Panc1 (cell line): ENCODE measurements at regions of chr15 and their contacts with region 1.

Region 1: DNA sequence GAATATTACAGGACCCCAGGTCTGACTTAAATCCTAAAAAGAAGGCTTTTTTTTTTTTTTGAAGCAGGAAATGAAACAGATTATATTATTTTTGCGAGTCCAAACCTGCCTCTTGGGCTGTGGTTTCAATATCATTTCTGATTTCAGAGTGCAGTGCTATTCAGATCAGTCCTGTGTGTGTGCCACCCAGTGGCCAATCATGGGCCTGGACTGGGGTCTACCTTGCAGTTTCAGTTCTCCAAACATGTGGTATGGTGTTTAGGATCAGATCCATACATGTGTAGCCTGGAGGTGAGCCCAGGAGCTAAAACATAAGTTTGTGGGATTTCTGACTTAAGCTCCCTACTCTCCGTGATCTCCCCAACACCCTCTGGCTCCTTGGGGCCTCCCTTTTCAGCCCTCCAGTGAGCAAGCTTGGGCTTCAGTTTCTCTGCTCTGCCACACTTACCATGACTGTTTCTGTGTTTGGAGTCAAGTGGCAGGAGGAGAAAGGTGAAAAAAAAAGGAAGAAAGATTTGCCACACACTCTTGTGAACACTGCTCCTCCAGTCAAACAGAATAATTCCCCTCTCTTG is 12.1 kb upstream of the THSD4 start:
- DNase-seq: no peak
- ATAC-seq: peak; percentile 90
- H3K4me3 ChIP-seq: no peak overlapping the region
- H3K27ac ChIP-seq: peak overlapping the region; percentile 5
- H3K4me1 ChIP-seq: 0 out of 2 replicates have a peak, but pooled peaks cover 4% of the 10 kb centered on the region
- H3K27me3 ChIP-seq: no peaks in the 10 kb centered on the region
- CTCF ChIP-seq: peak; percentile 71

Region 2: GRCh38 chr15:70892002-70892914 is 210.9 kb before region 1 on chr15 and contains the starts of genes LRRC49 and THAP10:
- CTCF ChIA-PET with region 1: no interaction called
- POLR2A ChIA-PET with region 1: no interaction called
- in situ Hi-C with region 1: no loop called
- intact Hi-C with region 1: no loop called
- DNase-seq: peak; percentile 96
- ATAC-seq: peak; percentile 99
- H3K4me3 ChIP-seq: peak within 1 kb of the TSS; percentile 77 to 84
- H3K27ac ChIP-seq: peak within 1 kb of the TSS; percentile 83
- H3K4me1 ChIP-seq: peaks cover 14% of the 10 kb centered on the region
- H3K27me3 ChIP-seq: no peaks in the 10 kb centered on the region
- CTCF ChIP-seq: no peak
- total RNA-seq, gene LRRC49: 8.3 TPM
- total RNA-seq, gene THAP10: 6.7 TPM

Region 3: GRCh38 chr15:71011503-71012155 is 91.6 kb before region 1 on chr15:
- CTCF ChIA-PET with region 1: no interaction called
- POLR2A ChIA-PET with region 1: no interaction called
- in situ Hi-C with region 1: no loop called
- intact Hi-C with region 1: loop called (anchors 5 kb)
- DNase-seq: peak; percentile 32
- ATAC-seq: peak; percentile 94
- H3K4me3 ChIP-seq: no peak overlapping the region
- H3K27ac ChIP-seq: peak overlapping the region; percentile 65; the same call in 1 of the 2 replicates
- H3K4me1 ChIP-seq: peaks cover 6% of the 10 kb centered on the region; the same call in 1 of the 2 replicates
- H3K27me3 ChIP-seq: no peaks in the 10 kb centered on the region
- CTCF ChIP-seq: peak; percentile 86; the same call in 1 of the 2 replicates

Region 4: DNA sequence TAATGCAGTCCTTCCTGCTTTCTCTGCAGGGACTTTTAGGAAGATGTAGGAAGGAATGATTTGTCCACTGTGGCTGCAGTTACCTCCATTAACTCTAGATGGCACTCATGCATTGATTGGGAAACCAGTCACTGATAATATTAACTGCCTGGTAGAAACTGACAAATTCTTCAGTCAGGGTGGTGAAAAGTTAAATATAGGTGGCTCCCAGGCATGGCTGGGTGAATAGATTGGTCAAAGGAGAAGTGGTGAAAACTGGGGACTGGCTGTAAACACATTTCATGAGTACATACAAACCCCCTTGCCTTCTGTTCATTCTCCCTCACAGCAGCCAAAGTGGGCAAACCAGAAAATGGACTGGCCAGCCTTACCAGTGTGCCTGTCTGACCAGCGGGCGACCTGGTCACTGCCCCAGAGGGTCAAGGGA is 345.5 kb after region 1 on chr15:
- CTCF ChIA-PET with region 1: no interaction called
- POLR2A ChIA-PET with region 1: no interaction called
- in situ Hi-C with region 1: no loop called
- intact Hi-C with region 1: no loop called
- DNase-seq: peak; percentile 57
- ATAC-seq: peak; percentile 56; the same call in 1 of the 2 replicates
- H3K4me3 ChIP-seq: no peak overlapping the region
- H3K27ac ChIP-seq: no peak overlapping the region; the same call in 1 of the 2 replicates
- H3K4me1 ChIP-seq: peaks cover 13% of the 10 kb centered on the region
- H3K27me3 ChIP-seq: no peaks in the 10 kb centered on the region
- CTCF ChIP-seq: peak; percentile 90

Region 5: DNA sequence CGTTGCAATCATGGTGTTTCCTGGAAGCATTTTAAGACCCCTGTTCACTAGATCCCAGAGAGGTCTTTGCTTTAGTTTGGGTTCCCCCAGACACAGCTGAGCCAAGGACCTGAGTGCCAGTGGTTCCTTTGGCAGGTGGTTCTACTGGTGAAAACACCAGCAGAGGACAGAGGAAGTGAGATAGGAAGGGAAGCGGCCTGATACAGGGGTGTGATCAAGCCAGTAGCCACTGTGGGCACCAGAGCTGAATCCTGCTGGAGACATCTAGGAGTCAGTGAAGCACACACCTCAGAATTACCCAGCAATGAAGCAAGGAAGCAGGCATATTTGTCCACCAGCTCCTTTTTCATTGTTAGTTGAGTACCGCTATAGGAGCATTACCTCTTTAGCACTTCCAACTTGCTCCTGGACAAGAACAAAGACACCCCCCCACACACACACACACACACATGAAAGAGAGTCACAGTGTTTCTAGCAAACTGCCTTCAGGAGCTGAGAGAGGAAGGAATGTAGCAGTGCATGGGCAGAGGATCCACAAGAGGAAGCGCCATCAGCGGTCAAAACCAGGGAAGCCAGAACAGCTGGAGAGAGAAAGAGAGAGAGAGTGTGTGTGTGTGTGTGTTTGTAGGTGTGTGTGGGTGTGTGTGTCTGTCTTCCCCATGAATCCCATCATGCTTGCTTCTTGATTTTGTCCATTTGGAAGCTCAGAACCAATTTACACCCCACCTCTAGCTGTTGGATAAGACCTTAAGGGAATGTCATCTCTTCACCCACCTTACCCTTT is 464.2 kb after region 1 on chr15:
- CTCF ChIA-PET with region 1: no interaction called
- POLR2A ChIA-PET with region 1: interaction called, 10 read pairs
- in situ Hi-C with region 1: no loop called
- intact Hi-C with region 1: no loop called
- DNase-seq: no peak
- ATAC-seq: no peak
- H3K4me3 ChIP-seq: no peak overlapping the region
- H3K27ac ChIP-seq: no peak overlapping the region
- H3K4me1 ChIP-seq: no peaks in the 10 kb centered on the region
- H3K27me3 ChIP-seq: no peaks in the 10 kb centered on the region
- CTCF ChIP-seq: no peak

Region 6: GRCh38 chr15:71732636-71733035 is 629.4 kb after region 1 on chr15:
- CTCF ChIA-PET with region 1: no interaction called
- POLR2A ChIA-PET with region 1: no interaction called
- in situ Hi-C with region 1: no loop called
- intact Hi-C with region 1: no loop called
- DNase-seq: no peak
- ATAC-seq: no peak
- H3K4me3 ChIP-seq: no peak overlapping the region
- H3K27ac ChIP-seq: no peak overlapping the region
- H3K4me1 ChIP-seq: no peaks in the 10 kb centered on the region
- H3K27me3 ChIP-seq: no peaks in the 10 kb centered on the region
- CTCF ChIP-seq: no peak